ENCODE measurements at regions of chr11 and their contacts with region 1.

Region 1: DNA sequence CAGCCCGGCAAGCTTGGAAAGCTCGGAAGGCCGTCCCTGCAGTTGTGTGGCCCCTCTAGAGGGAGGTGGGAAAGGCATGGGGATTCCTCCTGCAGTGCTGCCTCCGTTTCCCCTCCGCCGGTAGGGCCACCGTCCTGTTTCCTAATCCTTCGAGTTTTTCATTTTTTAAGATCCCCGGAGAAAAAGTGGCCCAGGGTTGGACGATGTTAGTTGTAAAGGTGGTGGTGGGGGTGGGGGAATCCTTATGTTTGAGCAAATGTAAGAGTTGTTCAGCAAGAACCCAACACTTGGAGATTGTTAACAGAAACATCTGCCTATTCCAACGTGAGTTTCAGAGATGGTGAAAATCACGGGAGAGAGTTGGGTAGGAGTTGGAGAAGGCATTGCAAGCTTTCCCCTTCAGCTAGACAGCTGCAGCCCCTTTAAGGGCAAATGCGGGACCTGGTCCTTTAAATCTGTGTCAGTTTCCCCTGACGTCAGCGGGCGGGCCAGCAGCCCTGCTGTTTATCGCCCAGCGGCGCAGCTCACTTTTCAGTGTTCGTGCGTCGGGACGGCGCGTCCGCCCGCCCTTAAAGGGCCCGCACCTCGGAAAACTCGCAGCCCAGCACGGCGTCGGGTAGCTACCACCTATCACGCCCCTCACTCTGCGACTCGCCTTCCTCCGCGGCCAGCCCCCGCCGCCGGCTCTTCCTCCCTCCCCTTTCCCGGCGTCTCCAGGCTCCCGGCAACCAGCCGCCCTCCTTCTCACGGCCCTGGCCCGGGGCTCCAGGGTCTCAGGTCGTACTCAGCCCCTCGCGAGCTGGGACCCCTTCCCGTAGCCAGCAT is at the start of gene SIDT2:
- DNase-seq: peak; percentile 85
- H3K4me3 ChIP-seq: peak within 1 kb of the TSS; percentile 74 to 80 (median 74)
- H3K27ac ChIP-seq: peak within 1 kb of the TSS; percentile 42
- H3K4me1 ChIP-seq: peaks cover 25% of the 10 kb centered on the region
- H3K27me3 ChIP-seq: no peaks in the 10 kb centered on the region
- CTCF ChIP-seq: no peak
- total RNA-seq, gene SIDT2: 17.2 to 30.6 TPM

Region 2: DNA sequence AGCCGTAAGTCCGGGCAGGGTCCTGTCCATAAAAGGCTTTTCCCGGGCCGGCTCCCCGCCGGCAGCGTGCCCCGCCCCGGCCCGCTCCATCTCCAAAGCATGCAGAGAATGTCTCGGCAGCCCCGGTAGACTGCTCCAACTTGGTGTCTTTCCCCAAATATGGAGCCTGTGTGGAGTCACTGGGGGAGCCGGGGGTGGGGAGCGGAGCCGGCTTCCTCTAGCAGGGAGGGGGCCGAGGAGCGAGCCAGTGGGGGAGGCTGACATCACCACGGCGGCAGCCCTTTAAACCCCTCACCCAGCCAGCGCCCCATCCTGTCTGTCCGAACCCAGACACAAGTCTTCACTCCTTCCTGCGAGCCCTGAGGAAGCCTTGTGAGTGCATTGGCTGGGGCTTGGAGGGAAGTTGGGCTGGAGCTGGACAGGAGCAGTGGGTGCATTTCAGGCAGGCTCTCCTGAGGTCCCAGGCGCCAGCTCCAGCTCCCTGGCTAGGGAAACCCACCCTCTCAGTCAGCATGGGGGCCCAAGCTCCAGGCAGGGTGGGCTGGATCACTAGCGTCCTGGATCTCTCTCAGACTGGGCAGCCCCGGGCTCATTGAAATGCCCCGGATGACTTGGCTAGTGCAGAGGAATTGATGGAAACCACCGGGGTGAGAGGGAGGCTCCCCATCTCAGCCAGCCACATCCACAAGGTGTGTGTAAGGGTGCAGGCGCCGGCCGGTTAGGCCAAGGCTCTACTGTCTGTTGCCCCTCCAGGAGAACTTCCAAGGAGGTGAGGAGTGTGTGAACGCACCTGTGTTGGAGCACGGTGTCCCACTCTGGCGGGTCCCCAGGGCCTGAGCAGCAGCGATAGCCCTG is 20.9 kb after region 1 on chr11 and contains the start of gene TAGLN:
- CTCF ChIA-PET with region 1: no interaction called
- dilution Hi-C with region 1: no loop called
- in situ Hi-C with region 1: no loop called
- intact Hi-C with region 1: loop called (anchors 1 kb)
- DNase-seq: peak; percentile 57
- H3K4me3 ChIP-seq: peak within 1 kb of the TSS; percentile 11 to 43 (median 25)
- H3K27ac ChIP-seq: no peak within 1 kb of the TSS
- H3K4me1 ChIP-seq: peaks cover 23% of the 10 kb centered on the region
- H3K27me3 ChIP-seq: no peaks in the 10 kb centered on the region
- CTCF ChIP-seq: no peak
- total RNA-seq, gene TAGLN: 171 to 3,470 TPM